ENCODE measurements at regions of chr2 and their contacts with region 1.

Region 1: DNA sequence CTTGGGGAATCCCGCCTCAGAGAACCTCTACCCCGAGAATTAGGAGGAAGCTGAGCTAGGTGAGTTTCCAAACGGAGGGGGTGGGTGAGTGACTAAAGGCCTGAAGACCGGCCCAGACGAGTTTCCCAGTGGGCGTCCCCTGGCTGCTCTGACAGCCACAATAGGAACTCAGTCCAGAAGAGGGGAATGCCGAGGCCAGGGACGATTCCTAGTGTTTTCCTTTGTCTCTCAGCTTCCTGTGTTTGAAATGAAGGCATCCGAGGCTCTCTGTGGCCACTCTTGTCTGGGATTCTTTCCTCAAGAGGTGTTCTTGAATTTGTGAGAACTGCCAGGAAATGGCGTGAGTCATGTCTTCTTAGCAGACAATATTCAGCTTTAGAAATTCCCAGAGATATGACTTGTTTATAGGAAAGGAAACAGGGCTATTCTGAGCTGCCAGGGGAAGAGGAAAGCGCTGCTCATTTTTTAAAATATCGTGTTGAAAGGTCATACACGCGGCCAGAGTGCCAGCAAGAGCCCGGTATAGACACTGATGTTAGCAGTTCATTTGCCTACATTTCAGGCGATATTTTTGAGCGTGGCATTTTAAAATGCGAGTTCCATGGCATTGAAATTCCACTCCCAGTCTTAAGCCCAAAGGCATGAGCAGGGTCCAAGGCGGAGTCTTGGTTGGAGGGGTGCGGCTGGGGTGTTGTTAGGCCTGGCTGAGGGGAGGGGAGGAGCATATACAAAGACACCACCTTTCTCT is 169.1 kb upstream of the KLF7 start:
- DNase-seq: peak; percentile 77
- H3K4me3 Mint-ChIP-seq: peak overlapping the region; percentile 59
- H3K27ac Mint-ChIP-seq: peak overlapping the region; percentile 98
- H3K4me1 Mint-ChIP-seq: peaks cover 82% of the 10 kb centered on the region
- H3K27me3 Mint-ChIP-seq: no peaks in the 10 kb centered on the region

Region 2: DNA sequence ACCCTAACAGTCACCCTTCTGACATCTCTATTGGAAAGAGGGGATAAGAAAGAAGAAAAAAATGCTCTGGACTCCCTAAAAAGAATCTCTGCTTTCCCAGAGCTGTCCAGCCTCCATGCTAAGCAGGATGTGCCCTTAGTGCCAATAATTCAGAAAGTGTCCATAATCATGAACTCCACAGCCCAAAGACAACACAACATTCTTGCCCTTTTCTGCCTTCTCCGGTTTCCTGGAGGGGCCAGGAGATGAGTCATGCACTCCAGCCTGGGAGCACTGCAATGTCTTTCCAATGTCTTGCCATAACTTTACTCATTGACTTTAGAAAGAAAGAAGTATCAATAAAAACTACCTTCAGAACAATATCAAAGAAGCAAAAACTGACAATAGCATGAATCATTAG is 213.0 kb before region 1 on chr2:
- CTCF ChIA-PET with region 1: no interaction called
- POLR2A ChIA-PET with region 1: interaction called, 3 read pairs
- intact Hi-C with region 1: loop called (anchors 2 kb)
- DNase-seq: no peak
- H3K4me3 Mint-ChIP-seq: no peak overlapping the region
- H3K27ac Mint-ChIP-seq: peak overlapping the region; percentile 55
- H3K4me1 Mint-ChIP-seq: peaks cover 61% of the 10 kb centered on the region
- H3K27me3 Mint-ChIP-seq: no peaks in the 10 kb centered on the region

Region 3: DNA sequence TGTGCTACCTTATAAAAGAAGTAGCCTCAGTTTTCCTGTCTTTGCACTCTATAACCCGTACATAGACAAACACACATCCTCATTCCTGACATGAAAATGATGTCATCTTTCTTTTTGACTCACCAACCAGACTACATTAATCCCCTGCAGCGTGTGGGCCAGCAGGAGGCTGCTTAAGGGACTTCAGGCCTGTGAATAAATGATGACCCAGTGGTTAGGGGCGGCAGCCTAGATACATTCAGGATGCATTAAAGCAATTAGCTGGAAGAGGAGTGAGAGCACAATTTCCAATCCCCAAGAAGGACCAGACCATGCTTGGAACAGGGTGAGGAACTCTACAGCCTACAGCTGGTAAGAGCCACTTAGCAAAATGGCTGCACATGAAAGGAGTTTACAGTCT is 111.7 kb before region 1 on chr2:
- CTCF ChIA-PET with region 1: interaction called, 8 read pairs
- POLR2A ChIA-PET with region 1: interaction called, 3 read pairs
- intact Hi-C with region 1: loop called (anchors 2 kb)
- DNase-seq: peak; percentile 56
- H3K4me3 Mint-ChIP-seq: no peak overlapping the region
- H3K27ac Mint-ChIP-seq: peak overlapping the region; percentile 24
- H3K4me1 Mint-ChIP-seq: peaks cover 46% of the 10 kb centered on the region
- H3K27me3 Mint-ChIP-seq: peaks cover 3% of the 10 kb centered on the region

Region 4: DNA sequence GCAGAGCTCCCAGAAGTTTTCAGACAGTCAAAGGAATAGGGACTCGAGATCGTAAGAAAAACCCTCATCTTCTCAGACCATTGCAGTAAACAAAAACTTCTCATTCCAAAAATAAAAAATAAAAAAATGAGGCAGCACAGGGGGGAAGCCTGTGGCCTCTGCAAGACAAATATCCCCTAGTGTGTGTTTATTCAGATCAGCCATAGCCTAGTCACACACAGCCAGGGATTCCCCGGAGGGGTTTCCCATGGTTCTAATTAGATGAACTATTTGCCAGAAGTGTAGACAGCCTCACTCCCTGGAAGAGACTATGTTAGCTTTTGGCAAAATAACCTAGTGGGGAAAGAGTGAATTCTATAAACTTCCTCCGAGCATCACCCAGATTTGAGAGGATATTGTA is 46.2 kb before region 1 on chr2:
- CTCF ChIA-PET with region 1: interaction called, 3 read pairs
- POLR2A ChIA-PET with region 1: interaction called, 4 read pairs
- intact Hi-C with region 1: loop called (anchors 1 kb)
- DNase-seq: peak; percentile 76
- H3K4me3 Mint-ChIP-seq: no peak overlapping the region
- H3K27ac Mint-ChIP-seq: peak overlapping the region; percentile 9
- H3K4me1 Mint-ChIP-seq: peaks cover 80% of the 10 kb centered on the region
- H3K27me3 Mint-ChIP-seq: peaks cover 4% of the 10 kb centered on the region

Region 5: GRCh38 chr2:207394812-207395534 is 60.2 kb after region 1 on chr2:
- CTCF ChIA-PET with region 1: no interaction called
- POLR2A ChIA-PET with region 1: no interaction called
- intact Hi-C with region 1: loop called (anchors 2 kb)
- DNase-seq: peak; percentile 86
- H3K4me3 Mint-ChIP-seq: no peak overlapping the region
- H3K27ac Mint-ChIP-seq: peak overlapping the region; percentile 85
- H3K4me1 Mint-ChIP-seq: peaks cover 17% of the 10 kb centered on the region
- H3K27me3 Mint-ChIP-seq: peaks cover 1% of the 10 kb centered on the region

Region 6: DNA sequence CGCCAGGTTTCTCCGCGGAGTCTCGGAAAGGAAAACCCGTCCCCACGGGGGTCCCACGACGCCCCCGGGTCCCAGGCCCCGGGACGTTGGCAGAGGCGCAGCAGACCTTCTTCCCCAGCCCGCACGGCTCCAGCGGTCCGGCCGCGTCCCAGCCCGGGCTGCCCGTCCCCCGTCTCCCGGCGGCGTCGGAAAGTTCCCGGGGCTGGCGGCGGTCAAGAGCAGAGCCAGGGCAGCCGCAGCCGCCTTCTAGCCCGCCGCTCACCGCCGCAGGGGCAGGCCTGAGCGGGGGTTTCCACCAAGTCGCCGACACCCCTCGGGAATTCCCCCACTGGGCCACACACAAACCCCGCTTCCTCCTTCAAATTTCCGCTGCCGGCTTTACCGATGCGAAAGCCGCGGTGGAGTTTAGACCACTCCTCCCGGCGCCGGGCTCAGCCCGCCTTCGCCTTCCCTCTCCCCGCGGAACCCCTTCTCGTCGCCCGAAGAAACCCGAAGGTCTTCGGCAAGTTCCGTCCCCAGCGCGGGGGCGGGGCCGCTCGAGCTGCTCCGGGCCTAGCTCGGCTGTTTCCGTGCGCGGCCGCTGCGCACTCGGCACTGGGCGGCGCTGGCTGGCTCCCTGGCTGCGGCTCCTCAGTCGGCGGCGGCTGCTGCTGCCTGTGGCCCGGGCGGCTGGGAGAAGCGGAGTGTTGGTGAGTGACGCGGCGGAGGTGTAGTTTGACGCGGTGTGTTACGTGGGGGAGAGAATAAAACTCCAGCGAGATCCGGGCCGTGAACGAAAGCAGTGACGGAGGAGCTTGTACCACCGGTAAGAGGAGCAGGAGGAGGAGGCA is 194.7 kb after region 1 on chr2 and contains the start of gene CREB1:
- CTCF ChIA-PET with region 1: no interaction called
- POLR2A ChIA-PET with region 1: interaction called, 5 read pairs
- intact Hi-C with region 1: loop called (anchors 2 kb)
- DNase-seq: peak; percentile 100
- H3K4me3 Mint-ChIP-seq: peak within 1 kb of the TSS; percentile 89
- H3K27ac Mint-ChIP-seq: peak within 1 kb of the TSS; percentile 99
- H3K4me1 Mint-ChIP-seq: peaks cover 50% of the 10 kb centered on the region
- H3K27me3 Mint-ChIP-seq: no peaks in the 10 kb centered on the region
- total RNA-seq, gene CREB1: 90.7 to 92.2 TPM

Region 7: GRCh38 chr2:208783187-208783586 is 1448.4 kb after region 1 on chr2:
- CTCF ChIA-PET with region 1: no interaction called
- POLR2A ChIA-PET with region 1: no interaction called
- intact Hi-C with region 1: no loop called
- DNase-seq: no peak
- H3K4me3 Mint-ChIP-seq: no peak overlapping the region
- H3K27ac Mint-ChIP-seq: no peak overlapping the region
- H3K4me1 Mint-ChIP-seq: no peaks in the 10 kb centered on the region
- H3K27me3 Mint-ChIP-seq: no peaks in the 10 kb centered on the region